Activated CD4-positive, alpha-beta memory T cell treated with anti-CD3 and anti-CD28 coated beads for 36 hours (primary cell): ENCODE measurements at regions of chr2 and their contacts with region 1.

Region 1: GRCh38 chr2:96407041-96407918 is 71.7 kb downstream of the NCAPH start:
- DNase-seq: peak; percentile 82
- H3K4me3 Mint-ChIP-seq: peak overlapping the region; percentile 8
- H3K27ac Mint-ChIP-seq: peak overlapping the region; percentile 65
- H3K4me1 Mint-ChIP-seq: peaks cover 20% of the 10 kb centered on the region
- H3K27me3 Mint-ChIP-seq: no peaks in the 10 kb centered on the region

Region 2: DNA sequence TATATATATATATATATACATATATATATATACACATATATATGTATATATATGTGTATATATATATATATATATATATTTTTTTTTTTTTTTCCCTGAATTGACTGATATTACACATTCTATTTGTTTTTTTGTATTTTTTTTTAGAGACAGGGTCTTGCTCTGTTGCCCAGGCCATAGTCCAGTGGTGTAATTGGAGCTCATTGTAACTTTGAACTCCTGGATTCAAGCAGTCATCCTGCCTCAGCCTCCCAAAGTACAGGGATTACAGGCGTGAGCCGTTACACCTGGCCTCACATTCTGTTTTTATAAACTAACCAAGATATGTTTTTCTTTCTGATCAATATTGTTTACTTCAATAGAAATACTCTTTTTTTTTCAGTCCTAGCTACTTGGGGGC is 45.5 kb before region 1 on chr2:
- CTCF ChIA-PET with region 1: no interaction called
- POLR2A ChIA-PET with region 1: no interaction called
- intact Hi-C with region 1: no loop called
- DNase-seq: no peak
- H3K4me3 Mint-ChIP-seq: no peak overlapping the region
- H3K27ac Mint-ChIP-seq: no peak overlapping the region
- H3K4me1 Mint-ChIP-seq: peaks cover 14% of the 10 kb centered on the region
- H3K27me3 Mint-ChIP-seq: no peaks in the 10 kb centered on the region

Region 3: DNA sequence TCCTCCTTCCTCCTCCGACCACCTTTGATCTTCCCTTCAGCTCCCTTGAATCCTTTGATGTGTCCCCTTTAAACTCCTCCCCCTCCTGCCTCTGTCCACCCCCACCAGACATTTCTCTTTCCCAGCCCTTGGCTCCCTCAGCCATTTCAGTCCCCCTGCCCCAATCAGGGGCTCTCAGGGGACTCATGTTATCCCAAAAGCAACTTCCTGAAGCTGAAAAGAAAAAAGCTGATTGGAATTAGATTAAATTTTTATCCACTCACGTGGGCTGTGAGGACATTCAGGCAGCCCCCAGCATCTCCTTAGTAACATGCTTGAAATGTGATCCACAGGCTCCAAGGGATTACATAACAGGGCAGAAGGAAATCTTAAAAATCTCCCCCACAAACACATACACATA is 16.5 kb after region 1 on chr2:
- CTCF ChIA-PET with region 1: interaction called, 17 read pairs
- POLR2A ChIA-PET with region 1: interaction called, 3 read pairs
- intact Hi-C with region 1: no loop called
- DNase-seq: no peak
- H3K4me3 Mint-ChIP-seq: no peak overlapping the region
- H3K27ac Mint-ChIP-seq: no peak overlapping the region
- H3K4me1 Mint-ChIP-seq: peaks cover 10% of the 10 kb centered on the region
- H3K27me3 Mint-ChIP-seq: peaks cover 13% of the 10 kb centered on the region

Region 4: GRCh38 chr2:96470636-96471035 is 63.4 kb after region 1 on chr2:
- CTCF ChIA-PET with region 1: interaction called, 12 read pairs
- POLR2A ChIA-PET with region 1: no interaction called
- intact Hi-C with region 1: no loop called
- DNase-seq: peak; percentile 70
- H3K4me3 Mint-ChIP-seq: no peak overlapping the region
- H3K27ac Mint-ChIP-seq: no peak overlapping the region
- H3K4me1 Mint-ChIP-seq: peaks cover 7% of the 10 kb centered on the region
- H3K27me3 Mint-ChIP-seq: peaks cover 4% of the 10 kb centered on the region

Region 5: GRCh38 chr2:96493072-96493471 is 85.8 kb after region 1 on chr2:
- CTCF ChIA-PET with region 1: interaction called, 20 read pairs
- POLR2A ChIA-PET with region 1: no interaction called
- intact Hi-C with region 1: loop called (anchors 5 kb)
- DNase-seq: no peak
- H3K4me3 Mint-ChIP-seq: no peak overlapping the region
- H3K27ac Mint-ChIP-seq: no peak overlapping the region
- H3K4me1 Mint-ChIP-seq: peaks cover 34% of the 10 kb centered on the region
- H3K27me3 Mint-ChIP-seq: no peaks in the 10 kb centered on the region

Region 6: GRCh38 chr2:96554293-96555145 is 147.2 kb after region 1 on chr2:
- CTCF ChIA-PET with region 1: interaction called, 33 read pairs
- POLR2A ChIA-PET with region 1: no interaction called
- intact Hi-C with region 1: loop called (anchors 1 kb)
- DNase-seq: peak; percentile 78
- H3K4me3 Mint-ChIP-seq: peak overlapping the region; percentile 43
- H3K27ac Mint-ChIP-seq: peak overlapping the region; percentile 77
- H3K4me1 Mint-ChIP-seq: peaks cover 41% of the 10 kb centered on the region
- H3K27me3 Mint-ChIP-seq: peaks cover 1% of the 10 kb centered on the region